Caco-2 (cell line): ENCODE measurements at regions of chr18 and their contacts with region 1.

Region 1: DNA sequence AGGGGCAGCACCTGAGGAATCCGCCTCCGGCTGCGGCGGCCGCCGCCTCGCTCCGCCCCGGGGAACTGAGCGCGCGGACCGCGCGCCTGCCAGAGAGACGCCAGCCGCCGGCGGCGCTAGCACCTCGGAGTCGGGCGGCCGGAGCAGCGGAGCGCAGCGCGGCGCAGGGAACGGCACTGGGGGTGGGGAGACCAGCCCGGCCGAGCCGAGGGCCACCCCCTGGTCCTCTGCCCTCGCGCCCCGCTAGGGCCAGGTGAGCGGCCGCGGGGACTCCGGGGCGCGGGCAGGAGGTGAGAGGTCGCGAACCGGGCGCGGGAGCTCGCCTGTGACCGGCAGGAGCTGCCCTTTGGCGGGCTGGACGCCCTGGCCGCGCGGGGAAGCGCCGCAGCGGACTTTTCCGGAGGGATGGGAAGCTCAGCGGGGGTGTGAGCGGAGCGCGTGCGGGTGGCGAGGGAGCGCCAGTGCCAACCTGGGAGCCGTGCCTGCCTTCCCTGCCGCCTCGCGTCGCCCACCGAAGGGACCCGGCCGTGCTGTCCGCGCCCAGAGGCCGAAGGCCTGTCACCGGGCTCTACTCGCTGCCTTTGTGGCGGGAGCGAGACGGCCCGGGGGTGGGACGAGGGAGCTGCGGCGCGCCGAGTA is at the start of gene GREB1L:
- DNase-seq: peak; percentile 82 to 91
- H3K4me3 ChIP-seq: peak within 1 kb of the TSS; percentile 99
- H3K4me3 Mint-ChIP-seq: peak within 1 kb of the TSS; percentile 95
- H3K27ac Mint-ChIP-seq: peak within 1 kb of the TSS; percentile 91
- H3K4me1 ChIP-seq: peaks cover 25% of the 10 kb centered on the region; the same call in 1 of the 2 replicates
- H3K4me1 Mint-ChIP-seq: peaks cover 18% of the 10 kb centered on the region
- H3K27me3 ChIP-seq: no peaks in the 10 kb centered on the region
- H3K27me3 Mint-ChIP-seq: no peaks in the 10 kb centered on the region
- CTCF ChIP-seq: peak; percentile 28 to 35
- total RNA-seq, gene GREB1L: 71.1 and 75.4 TPM in 2 replicates

Region 2: DNA sequence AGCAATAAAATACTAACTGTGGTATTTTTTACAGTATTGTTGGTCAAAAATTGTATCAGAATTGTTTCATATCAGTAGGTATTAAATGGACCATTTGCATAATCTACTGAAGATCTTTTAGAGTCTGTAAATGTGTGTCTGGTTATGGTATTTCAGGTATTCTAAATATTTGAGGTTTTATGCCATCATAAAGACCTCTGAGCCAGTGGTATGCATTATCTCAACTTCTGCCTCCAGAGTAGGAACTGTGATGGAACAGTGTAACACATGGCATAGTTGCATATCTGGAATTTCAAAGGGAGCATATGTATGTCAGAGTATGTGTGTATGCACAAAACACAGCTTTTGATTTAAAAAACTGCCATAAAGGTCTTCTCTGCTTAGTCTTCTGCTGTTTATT is 15.1 kb after region 1 on chr18:
- CTCF ChIA-PET with region 1: no interaction called
- POLR2A ChIA-PET with region 1: interaction called, 3 read pairs
- intact Hi-C with region 1: loop called (anchors 2 kb)
- DNase-seq: peak in 1 of 2 experiments; percentile 50
- H3K4me3 ChIP-seq: no peak overlapping the region
- H3K4me3 Mint-ChIP-seq: peak overlapping the region; percentile 48
- H3K27ac Mint-ChIP-seq: peak overlapping the region; percentile 80
- H3K4me1 ChIP-seq: peaks cover 80% of the 10 kb centered on the region
- H3K4me1 Mint-ChIP-seq: peaks cover 26% of the 10 kb centered on the region
- H3K27me3 ChIP-seq: no peaks in the 10 kb centered on the region
- H3K27me3 Mint-ChIP-seq: no peaks in the 10 kb centered on the region
- CTCF ChIP-seq: no peak

Region 3: DNA sequence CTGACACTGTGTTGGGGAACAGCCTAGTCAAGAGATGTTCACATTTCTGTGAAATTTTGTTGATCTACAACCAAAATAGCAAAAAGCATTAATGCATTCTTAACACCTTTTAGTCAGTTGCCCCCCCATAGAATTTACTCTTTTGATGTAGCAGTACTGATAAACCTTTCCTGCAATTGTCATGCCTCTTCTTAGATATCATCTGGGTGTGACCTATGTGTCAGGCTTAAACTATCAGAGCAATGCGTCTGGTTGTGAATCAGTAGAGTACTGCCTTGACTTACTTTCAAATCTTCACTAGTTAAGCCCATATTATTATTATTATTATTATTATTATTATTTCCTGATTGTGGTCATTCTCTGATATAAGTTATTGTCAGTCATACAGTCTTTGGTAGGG is 61.7 kb after region 1 on chr18:
- CTCF ChIA-PET with region 1: no interaction called
- POLR2A ChIA-PET with region 1: no interaction called
- intact Hi-C with region 1: loop called (anchors 5 kb)
- DNase-seq: no peak
- H3K4me3 ChIP-seq: no peak overlapping the region
- H3K4me3 Mint-ChIP-seq: no peak overlapping the region
- H3K27ac Mint-ChIP-seq: peak overlapping the region; percentile 68
- H3K4me1 ChIP-seq: peaks cover 85% of the 10 kb centered on the region
- H3K4me1 Mint-ChIP-seq: peaks cover 58% of the 10 kb centered on the region
- H3K27me3 ChIP-seq: no peaks in the 10 kb centered on the region
- H3K27me3 Mint-ChIP-seq: no peaks in the 10 kb centered on the region
- CTCF ChIP-seq: no peak

Region 4: GRCh38 chr18:21315741-21316187 is 73.5 kb after region 1 on chr18:
- CTCF ChIA-PET with region 1: interaction called, 4 read pairs
- POLR2A ChIA-PET with region 1: interaction called, 3 read pairs
- intact Hi-C with region 1: loop called (anchors 5 kb)
- DNase-seq: peak; percentile 96 to 97
- H3K4me3 ChIP-seq: peak overlapping the region; percentile 25; the same call in 1 of the 2 replicates
- H3K4me3 Mint-ChIP-seq: peak overlapping the region; percentile 69
- H3K27ac Mint-ChIP-seq: peak overlapping the region; percentile 96
- H3K4me1 ChIP-seq: peaks cover 44% of the 10 kb centered on the region
- H3K4me1 Mint-ChIP-seq: peaks cover 36% of the 10 kb centered on the region
- H3K27me3 ChIP-seq: no peaks in the 10 kb centered on the region
- H3K27me3 Mint-ChIP-seq: no peaks in the 10 kb centered on the region
- CTCF ChIP-seq: peak in 1 of 2 experiments; percentile 19

Region 5: GRCh38 chr18:21391074-21391673 is 148.9 kb after region 1 on chr18:
- CTCF ChIA-PET with region 1: interaction called, 4 read pairs
- POLR2A ChIA-PET with region 1: no interaction called
- intact Hi-C with region 1: loop called (anchors 5 kb)
- DNase-seq: no peak
- H3K4me3 ChIP-seq: no peak overlapping the region
- H3K4me3 Mint-ChIP-seq: no peak overlapping the region
- H3K27ac Mint-ChIP-seq: no peak overlapping the region
- H3K4me1 ChIP-seq: peaks cover 14% of the 10 kb centered on the region; the same call in 1 of the 2 replicates
- H3K4me1 Mint-ChIP-seq: no peaks in the 10 kb centered on the region
- H3K27me3 ChIP-seq: no peaks in the 10 kb centered on the region
- H3K27me3 Mint-ChIP-seq: no peaks in the 10 kb centered on the region
- CTCF ChIP-seq: no peak

Region 6: GRCh38 chr18:21444465-21445023 is 202.3 kb after region 1 on chr18:
- CTCF ChIA-PET with region 1: no interaction called
- POLR2A ChIA-PET with region 1: no interaction called
- intact Hi-C with region 1: loop called (anchors 1 kb)
- DNase-seq: peak; percentile 50 to 61
- H3K4me3 ChIP-seq: no peak overlapping the region
- H3K4me3 Mint-ChIP-seq: no peak overlapping the region
- H3K27ac Mint-ChIP-seq: peak overlapping the region; percentile 2
- H3K4me1 ChIP-seq: peaks cover 19% of the 10 kb centered on the region
- H3K4me1 Mint-ChIP-seq: peaks cover 12% of the 10 kb centered on the region
- H3K27me3 ChIP-seq: no peaks in the 10 kb centered on the region
- H3K27me3 Mint-ChIP-seq: no peaks in the 10 kb centered on the region
- CTCF ChIP-seq: peak; percentile 78 to 89

Region 7: DNA sequence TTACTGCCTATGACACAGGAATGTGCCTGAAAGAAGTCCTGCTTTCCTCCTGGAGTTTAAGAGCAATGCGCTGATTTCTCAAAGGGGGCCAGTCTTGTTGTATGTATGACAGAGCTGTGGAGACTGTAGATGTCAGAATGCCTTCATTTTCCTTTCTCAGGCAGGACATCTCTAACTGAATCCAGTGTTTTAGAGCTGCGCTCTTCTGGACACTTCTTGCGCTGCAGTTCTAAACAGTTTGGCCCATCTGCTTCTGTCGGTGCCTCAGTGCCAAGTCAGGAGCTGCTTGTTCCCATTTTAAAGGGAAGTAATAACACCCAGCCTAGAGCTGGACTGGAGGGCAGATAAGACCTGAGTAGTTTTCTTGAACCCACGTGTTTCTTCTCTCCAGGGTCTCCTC is 266.8 kb after region 1 on chr18:
- CTCF ChIA-PET with region 1: no interaction called
- POLR2A ChIA-PET with region 1: no interaction called
- intact Hi-C with region 1: no loop called
- DNase-seq: no peak
- H3K4me3 ChIP-seq: no peak overlapping the region
- H3K4me3 Mint-ChIP-seq: no peak overlapping the region
- H3K27ac Mint-ChIP-seq: no peak overlapping the region
- H3K4me1 ChIP-seq: no peaks in the 10 kb centered on the region
- H3K4me1 Mint-ChIP-seq: no peaks in the 10 kb centered on the region
- H3K27me3 ChIP-seq: no peaks in the 10 kb centered on the region
- H3K27me3 Mint-ChIP-seq: no peaks in the 10 kb centered on the region
- CTCF ChIP-seq: no peak